H1 (cell line): ENCODE measurements at regions of chr4 and their contacts with region 1.

Region 1: GRCh38 chr4:6873792-6874461 is 35.7 kb upstream of the TBC1D14 start:
- DNase-seq: peak in 1 of 2 experiments; percentile 82
- H3K4me3 ChIP-seq: no peak overlapping the region
- H3K27ac ChIP-seq: no peak overlapping the region
- H3K4me1 ChIP-seq: no peaks in the 10 kb centered on the region
- H3K27me3 ChIP-seq: no peaks in the 10 kb centered on the region
- CTCF ChIP-seq: peak; percentile 76 to 93 (median 76)
- EP300 ChIP-seq: no peak
- POLR2A ChIP-seq: no peak
- RAD21 ChIP-seq: peak; percentile 81 to 86

Region 2: DNA sequence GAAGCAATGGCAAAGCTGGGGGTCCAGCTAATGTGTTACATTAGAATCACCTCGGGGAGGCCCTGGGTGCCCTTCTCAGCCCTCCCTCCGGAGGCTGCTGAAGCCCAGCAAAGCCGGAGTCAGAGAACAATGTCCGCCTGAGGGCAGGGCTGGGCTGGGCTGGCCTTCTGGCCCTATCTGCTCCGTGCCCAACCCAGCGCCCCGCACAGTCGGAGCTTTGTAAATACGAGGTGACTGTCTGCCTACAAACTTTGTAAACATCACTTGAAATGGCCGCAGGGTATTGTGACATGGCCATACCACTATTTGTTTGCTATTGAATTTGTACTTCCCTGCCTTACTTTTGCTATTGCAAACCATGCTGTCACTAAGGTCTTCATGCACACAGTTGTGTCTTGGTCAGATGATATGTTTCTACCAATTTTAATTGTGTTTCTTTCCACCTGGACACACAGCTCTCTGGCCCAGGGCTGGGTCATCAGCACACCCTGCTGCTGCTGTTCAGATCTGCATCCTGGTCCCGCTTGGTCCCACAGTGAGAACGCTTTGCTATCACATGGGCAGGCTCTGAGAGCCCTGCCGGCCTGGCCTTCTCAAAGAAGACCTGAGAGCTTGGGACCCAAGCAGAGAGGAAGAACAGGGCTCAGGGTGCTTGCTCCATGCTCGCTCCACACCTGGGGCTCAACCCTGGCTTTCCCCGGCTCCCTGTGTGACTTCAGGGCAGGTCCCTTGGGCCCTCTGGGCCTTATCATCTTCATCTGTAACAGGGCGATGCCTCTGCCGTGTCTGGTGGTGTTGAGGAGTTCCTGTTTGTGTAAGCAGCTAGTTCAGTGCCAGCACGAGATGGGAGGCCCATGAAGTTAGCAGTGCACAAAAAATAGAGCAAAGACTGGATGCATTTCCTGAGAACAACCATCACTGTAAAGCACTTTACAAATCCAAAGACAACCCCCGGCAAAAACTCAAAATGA is 178.0 kb before region 1 on chr4:
- CTCF ChIA-PET with region 1: interaction called, 12 read pairs
- POLR2A ChIA-PET with region 1: no interaction called
- DNase-seq: no peak
- H3K4me3 ChIP-seq: no peak overlapping the region
- H3K27ac ChIP-seq: no peak overlapping the region
- H3K4me1 ChIP-seq: no peaks in the 10 kb centered on the region; a peak in 1 of 7 replicates
- H3K27me3 ChIP-seq: no peaks in the 10 kb centered on the region
- CTCF ChIP-seq: no peak
- EP300 ChIP-seq: no peak
- POLR2A ChIP-seq: no peak
- RAD21 ChIP-seq: peak; percentile 9 to 18; a peak in 1 of 4 replicates

Region 3: DNA sequence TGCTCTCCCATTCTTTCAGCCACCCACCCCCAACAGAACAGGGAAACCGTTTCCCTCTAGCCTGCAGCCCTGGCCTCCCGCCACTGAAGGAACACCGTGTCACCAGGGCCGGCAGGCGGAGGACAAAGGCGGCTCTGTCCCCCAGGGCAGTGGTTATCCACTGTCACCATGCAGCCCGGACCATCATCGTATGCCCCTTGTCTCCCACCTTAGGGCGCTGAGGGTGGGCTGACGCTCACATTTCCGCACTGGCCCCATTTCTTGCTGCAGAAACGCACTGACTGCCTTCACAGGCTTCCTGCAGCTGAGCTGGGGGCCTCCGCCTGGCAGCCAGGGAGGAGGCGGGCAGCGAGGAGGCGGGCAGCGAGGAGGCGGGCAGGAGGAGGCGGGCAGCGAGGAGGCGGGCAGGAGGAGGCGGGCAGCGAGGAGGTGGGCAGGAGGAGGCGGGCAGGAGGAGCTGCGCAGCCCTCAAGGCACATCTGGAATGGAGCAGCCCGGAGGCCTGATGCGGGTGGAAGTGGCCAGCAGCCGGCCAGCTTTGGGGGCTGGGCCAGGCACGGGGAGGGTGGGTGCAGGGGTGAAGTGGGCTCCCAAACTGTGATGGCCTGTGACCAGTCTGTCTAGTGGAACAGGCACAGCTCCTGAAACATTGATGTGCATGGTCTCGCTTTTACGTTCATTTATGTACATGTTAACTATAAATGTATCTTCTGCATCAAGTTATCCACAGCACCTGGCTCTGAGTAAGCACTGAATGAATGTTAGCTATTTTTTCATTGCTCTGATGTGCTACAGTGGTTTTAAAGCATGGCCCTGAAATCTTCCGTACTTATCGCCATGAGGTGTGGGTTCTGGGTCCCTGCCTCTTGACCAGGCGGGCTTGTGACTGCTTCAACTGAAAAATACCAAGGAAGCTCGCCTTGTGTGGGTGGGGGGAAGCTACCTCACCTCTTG is 112.0 kb before region 1 on chr4:
- CTCF ChIA-PET with region 1: interaction called, 33 read pairs
- POLR2A ChIA-PET with region 1: no interaction called
- DNase-seq: no peak
- H3K4me3 ChIP-seq: no peak overlapping the region
- H3K27ac ChIP-seq: no peak overlapping the region
- H3K4me1 ChIP-seq: no peaks in the 10 kb centered on the region
- H3K27me3 ChIP-seq: no peaks in the 10 kb centered on the region
- CTCF ChIP-seq: no peak
- EP300 ChIP-seq: no peak
- POLR2A ChIP-seq: no peak
- RAD21 ChIP-seq: no peak

Region 4: GRCh38 chr4:6783053-6783981 is 90.6 kb before region 1 on chr4:
- CTCF ChIA-PET with region 1: interaction called, 38 read pairs
- POLR2A ChIA-PET with region 1: no interaction called
- DNase-seq: peak; percentile 23 to 90
- H3K4me3 ChIP-seq: peak overlapping the region; percentile 71 to 98 (median 88)
- H3K27ac ChIP-seq: peak overlapping the region; percentile 84
- H3K4me1 ChIP-seq: peaks cover 4 to 18% (median 12%) of the 10 kb centered on the region in 4 experiments; a peak in 6 of 7 replicates
- H3K27me3 ChIP-seq: peaks cover 0 to 9% (median 0%) of the 10 kb centered on the region in 4 experiments; a peak in 2 of 7 replicates
- CTCF ChIP-seq: no peak
- EP300 ChIP-seq: no peak
- POLR2A ChIP-seq: peak in 1 of 2 experiments; percentile 77; a peak in 2 of 3 replicates
- RAD21 ChIP-seq: peak; percentile 19 to 26; a peak in 3 of 4 replicates

Region 5: DNA sequence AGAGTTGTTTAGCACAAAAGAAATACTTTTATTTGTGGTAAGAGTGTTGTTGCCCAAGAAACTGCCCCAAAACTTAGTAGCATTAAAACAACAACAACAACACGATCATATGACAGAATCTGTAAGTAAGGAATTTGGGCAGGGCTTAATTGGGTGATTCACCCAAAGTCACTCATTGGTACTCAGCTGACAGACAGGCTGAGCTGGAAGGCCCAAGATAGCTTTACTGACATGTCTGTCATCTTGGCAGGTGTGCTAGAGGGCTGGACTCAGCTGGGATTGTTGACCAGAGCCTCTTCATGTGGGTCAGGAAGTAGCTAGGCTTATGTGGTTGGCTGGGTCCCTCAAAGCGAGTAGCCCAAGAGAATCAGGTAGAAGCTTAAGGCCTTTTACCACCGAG is 39.1 kb before region 1 on chr4:
- CTCF ChIA-PET with region 1: interaction called, 11 read pairs
- POLR2A ChIA-PET with region 1: no interaction called
- DNase-seq: no peak
- H3K4me3 ChIP-seq: no peak overlapping the region
- H3K27ac ChIP-seq: no peak overlapping the region
- H3K4me1 ChIP-seq: peaks cover 0 to 5% (median 2%) of the 10 kb centered on the region in 4 experiments; a peak in 4 of 7 replicates
- H3K27me3 ChIP-seq: peaks cover 0 to under 1% (median 0%) of the 10 kb centered on the region in 4 experiments; a peak in 1 of 7 replicates
- CTCF ChIP-seq: no peak
- EP300 ChIP-seq: no peak
- POLR2A ChIP-seq: no peak
- RAD21 ChIP-seq: no peak

Region 6: GRCh38 chr4:7081891-7082471 is 208.1 kb after region 1 on chr4:
- CTCF ChIA-PET with region 1: interaction called, 10 read pairs
- POLR2A ChIA-PET with region 1: no interaction called
- DNase-seq: peak in 1 of 2 experiments; percentile 75
- H3K4me3 ChIP-seq: no peak overlapping the region
- H3K27ac ChIP-seq: no peak overlapping the region
- H3K4me1 ChIP-seq: no peaks in the 10 kb centered on the region; a peak in 1 of 7 replicates
- H3K27me3 ChIP-seq: peaks cover 0 to 14% (median 6%) of the 10 kb centered on the region in 4 experiments; a peak in 4 of 7 replicates
- CTCF ChIP-seq: peak; percentile 76 to 85 (median 78)
- EP300 ChIP-seq: no peak
- POLR2A ChIP-seq: no peak
- RAD21 ChIP-seq: peak; percentile 89 to 93